Mammary epithelial cell (primary cell): ENCODE measurements at regions of chr1 and their contacts with region 1.

Region 1: DNA sequence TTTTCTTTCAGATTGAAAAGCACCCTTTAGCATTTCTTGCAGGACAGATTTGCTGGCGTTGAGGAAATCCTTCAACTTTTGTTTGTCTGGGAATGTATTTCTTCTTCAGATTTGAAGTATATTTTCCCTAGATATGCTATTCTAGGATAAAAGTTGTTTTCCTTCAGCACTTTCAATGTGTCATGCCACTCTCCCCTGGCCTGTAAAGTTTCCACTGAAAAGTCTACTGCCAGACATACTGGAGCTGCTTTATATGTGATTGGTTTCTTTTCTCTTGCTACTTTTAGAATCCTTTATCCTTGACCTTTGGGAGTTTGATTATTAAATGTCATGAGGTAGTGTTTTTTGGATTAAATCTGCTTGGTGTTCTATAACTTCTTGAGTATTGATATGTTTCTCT is 44.2 kb upstream of the CD55 start:
- DNase-seq: no peak
- H3K4me3 ChIP-seq: no peak overlapping the region
- H3K27ac ChIP-seq: no peak overlapping the region
- H3K4me1 ChIP-seq: peaks cover 3% of the 10 kb centered on the region
- H3K27me3 ChIP-seq: no peaks in the 10 kb centered on the region
- CTCF ChIP-seq: no peak

Region 2: DNA sequence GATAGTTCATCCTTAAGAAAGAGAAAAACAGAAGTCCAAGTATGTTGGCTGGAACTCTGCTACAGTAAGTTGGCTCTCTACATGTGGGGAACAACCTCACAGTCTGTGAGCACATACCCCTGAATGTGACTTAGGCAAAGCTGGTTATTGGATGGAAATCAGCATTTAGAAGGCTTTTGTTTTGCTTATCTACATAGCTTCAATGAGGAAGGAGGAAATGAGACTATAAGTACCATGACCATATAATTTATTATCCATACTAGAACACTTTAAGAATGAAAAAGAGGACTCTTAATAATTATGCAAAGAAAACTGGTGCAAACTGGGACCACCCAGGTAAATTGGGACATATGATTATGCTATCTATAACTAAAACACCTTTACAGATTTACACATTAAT is 12.5 kb after region 1 on chr1:
- CTCF ChIA-PET with region 1: no interaction called
- dilution Hi-C with region 1: no loop called
- in situ Hi-C with region 1: no loop called
- intact Hi-C with region 1: loop called (anchors 2 kb)
- DNase-seq: no peak
- H3K4me3 ChIP-seq: no peak overlapping the region
- H3K27ac ChIP-seq: no peak overlapping the region
- H3K4me1 ChIP-seq: no peaks in the 10 kb centered on the region
- H3K27me3 ChIP-seq: peaks cover 6% of the 10 kb centered on the region
- CTCF ChIP-seq: no peak

Region 3: GRCh38 chr1:207328004-207328403 is 50.8 kb after region 1 on chr1:
- CTCF ChIA-PET with region 1: no interaction called
- dilution Hi-C with region 1: no loop called
- in situ Hi-C with region 1: no loop called
- intact Hi-C with region 1: no loop called
- DNase-seq: peak; percentile 55
- H3K4me3 ChIP-seq: no peak overlapping the region
- H3K27ac ChIP-seq: no peak overlapping the region
- H3K4me1 ChIP-seq: no peaks in the 10 kb centered on the region
- H3K27me3 ChIP-seq: no peaks in the 10 kb centered on the region
- CTCF ChIP-seq: no peak